ENCODE measurements at regions of chr15 and their contacts with region 1.

Region 1: GRCh38 chr15:43105778-43106485 is at the start of gene UBR1:
- DNase-seq: peak; percentile 89 to 95
- ATAC-seq: peak; percentile 95 to 99 (median 98)
- H3K4me3 ChIP-seq: peak within 1 kb of the TSS; percentile 60 to 92 (median 78)
- H3K27ac ChIP-seq: peak within 1 kb of the TSS; percentile 52 to 98 (median 94)
- H3K4me1 ChIP-seq: peaks cover 3 to 44% (median 32%) of the 10 kb centered on the region in 9 donors
- H3K27me3 ChIP-seq: no peaks in the 10 kb centered on the region
- CTCF ChIP-seq: no peak
- total RNA-seq, gene UBR1: 19.2 to 46.2 (median 28.1) TPM

Region 2: DNA sequence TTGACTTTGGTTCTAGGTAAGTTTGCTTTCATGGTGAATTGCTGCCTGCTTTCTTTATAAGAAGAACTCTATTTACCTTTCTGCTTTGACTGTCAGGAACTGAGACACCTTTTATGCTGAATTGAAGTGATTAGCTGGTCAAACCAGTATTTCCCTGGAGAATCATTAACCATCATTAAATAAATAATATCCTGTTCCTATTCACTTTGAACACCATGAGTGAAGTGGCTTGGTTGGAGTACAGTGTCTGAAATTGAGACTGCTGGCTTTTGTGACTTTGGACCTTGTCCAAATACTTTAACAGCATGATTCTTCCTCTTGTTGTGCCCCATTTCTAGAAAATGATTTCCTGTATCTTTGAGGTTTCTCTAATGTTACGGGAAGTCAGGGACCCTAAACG is 21.8 kb after region 1 on chr15:
- intact Hi-C with region 1: loop called in 1 of 10 experiments (anchors 1 kb)
- DNase-seq: no peak
- ATAC-seq: no peak
- H3K4me3 ChIP-seq: no peak overlapping the region
- H3K27ac ChIP-seq: no peak overlapping the region
- H3K4me1 ChIP-seq: peaks cover 0 to 15% (median 4%) of the 10 kb centered on the region in 9 donors
- H3K27me3 ChIP-seq: no peaks in the 10 kb centered on the region
- CTCF ChIP-seq: no peak

Region 3: DNA sequence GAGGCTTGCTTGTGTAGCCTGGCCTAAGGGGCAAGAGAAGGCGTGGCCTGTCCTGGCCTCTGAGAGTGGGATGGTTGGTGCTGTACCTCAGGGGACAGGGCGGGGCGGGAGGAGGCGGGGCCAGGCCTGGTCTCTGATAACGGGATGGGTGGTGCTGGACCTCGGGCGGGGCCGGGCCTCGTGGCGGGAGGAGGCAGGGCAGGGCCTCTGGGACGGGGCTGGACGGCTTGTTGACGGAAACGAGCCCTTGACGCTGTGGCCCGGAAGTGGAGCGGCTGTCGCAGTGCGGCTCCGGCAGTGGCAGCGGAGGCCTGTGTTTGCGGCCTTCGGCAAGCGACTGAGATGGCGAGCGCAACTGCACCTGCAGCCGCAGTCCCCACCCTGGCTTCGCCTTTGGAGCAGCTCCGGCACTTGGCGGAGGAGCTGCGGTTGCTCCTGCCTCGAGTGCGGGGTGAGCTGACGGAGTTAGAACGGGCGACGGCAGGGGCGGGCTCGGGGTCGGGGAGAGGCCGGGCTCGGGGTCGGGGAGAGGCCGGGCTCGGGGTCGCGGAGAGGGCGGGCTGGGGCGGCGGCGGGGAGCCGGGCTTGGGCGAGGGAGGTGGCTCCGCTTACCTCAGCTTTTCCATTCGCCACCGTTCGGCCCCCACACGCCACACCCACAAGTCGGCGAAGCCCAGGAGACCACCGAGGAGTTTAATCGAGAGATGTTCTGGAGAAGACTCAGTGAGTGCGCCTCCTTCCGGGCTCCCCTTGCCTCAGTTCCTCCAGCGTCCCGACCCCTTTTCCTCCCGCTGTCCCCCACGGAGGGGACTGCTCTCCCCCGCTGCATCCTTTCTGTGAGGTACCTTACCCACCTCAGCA is 79.5 kb after region 1 on chr15 and contains the start of gene CCNDBP1:
- intact Hi-C with region 1: loop called in 1 of 10 experiments (anchors 10 kb)
- DNase-seq: peak; percentile 94 to 98
- ATAC-seq: peak; percentile 96 to 99 (median 98)
- H3K4me3 ChIP-seq: peak within 1 kb of the TSS; percentile 61 to 85 (median 76)
- H3K27ac ChIP-seq: peak within 1 kb of the TSS; percentile 74 to 94 (median 88)
- H3K4me1 ChIP-seq: peaks cover 0 to 53% (median 46%) of the 10 kb centered on the region in 9 donors
- H3K27me3 ChIP-seq: no peaks in the 10 kb centered on the region
- CTCF ChIP-seq: peak in 7 of 9 donors; percentile 25 to 55 (median 45)
- total RNA-seq, gene CCNDBP1: 43.7 to 65.1 (median 59.9) TPM

Region 4: DNA sequence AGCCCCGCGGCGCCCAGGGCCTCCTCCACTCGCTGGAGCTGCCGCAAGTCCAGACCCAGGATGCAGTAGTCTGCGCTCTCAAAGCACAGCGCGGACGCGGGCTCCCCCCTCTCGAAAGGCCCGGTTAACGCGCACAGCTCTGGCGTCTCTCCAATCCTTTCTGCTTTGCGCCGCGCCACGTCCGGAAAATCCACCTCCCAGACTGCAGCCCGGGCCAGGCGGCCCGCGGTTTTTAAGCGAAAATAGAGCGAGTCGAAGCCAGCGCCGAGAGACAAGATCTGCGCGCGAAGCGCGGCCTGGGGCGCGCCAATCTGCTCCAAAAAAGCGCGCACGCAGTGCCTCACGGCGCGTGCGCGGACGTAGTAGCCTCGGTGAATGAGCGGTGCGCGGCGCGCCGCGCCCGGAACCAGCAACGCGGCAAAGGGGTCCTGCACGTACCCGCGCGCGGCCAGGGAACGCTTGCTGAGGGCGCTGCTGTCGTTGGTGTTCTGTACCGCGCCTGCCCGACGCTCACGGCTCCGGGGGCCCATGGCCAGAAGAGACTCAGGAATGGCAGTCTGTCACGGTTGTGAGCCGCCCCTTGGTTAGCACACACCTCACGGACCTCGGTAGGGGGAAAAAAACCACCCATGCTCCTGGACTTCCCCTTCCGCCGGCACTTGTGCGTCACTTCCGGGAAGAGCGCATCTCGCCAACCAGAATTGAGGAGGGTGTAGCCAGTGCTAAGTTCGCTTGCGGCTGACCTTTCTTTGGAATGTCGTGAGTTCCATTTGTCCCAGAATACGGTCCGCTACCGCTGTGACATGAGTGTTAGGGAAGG is 224.2 kb after region 1 on chr15 and contains the start of gene LCMT2:
- intact Hi-C with region 1: loop called in 1 of 10 experiments (anchors 5 kb)
- DNase-seq: peak; percentile 91 to 95
- ATAC-seq: peak; percentile 96 to 98 (median 98)
- H3K4me3 ChIP-seq: peak within 1 kb of the TSS; percentile 58 to 87 (median 77)
- H3K27ac ChIP-seq: peak within 1 kb of the TSS; percentile 72 to 98 (median 94)
- H3K4me1 ChIP-seq: peaks cover 4 to 50% (median 33%) of the 10 kb centered on the region in 9 donors
- H3K27me3 ChIP-seq: no peaks in the 10 kb centered on the region
- CTCF ChIP-seq: peak in 1 of 9 donors; percentile 6
- total RNA-seq, gene LCMT2: 5.2 to 8.7 (median 6.2) TPM